ENCODE measurements at regions of chr16 and their contacts with region 1.

Region 1: DNA sequence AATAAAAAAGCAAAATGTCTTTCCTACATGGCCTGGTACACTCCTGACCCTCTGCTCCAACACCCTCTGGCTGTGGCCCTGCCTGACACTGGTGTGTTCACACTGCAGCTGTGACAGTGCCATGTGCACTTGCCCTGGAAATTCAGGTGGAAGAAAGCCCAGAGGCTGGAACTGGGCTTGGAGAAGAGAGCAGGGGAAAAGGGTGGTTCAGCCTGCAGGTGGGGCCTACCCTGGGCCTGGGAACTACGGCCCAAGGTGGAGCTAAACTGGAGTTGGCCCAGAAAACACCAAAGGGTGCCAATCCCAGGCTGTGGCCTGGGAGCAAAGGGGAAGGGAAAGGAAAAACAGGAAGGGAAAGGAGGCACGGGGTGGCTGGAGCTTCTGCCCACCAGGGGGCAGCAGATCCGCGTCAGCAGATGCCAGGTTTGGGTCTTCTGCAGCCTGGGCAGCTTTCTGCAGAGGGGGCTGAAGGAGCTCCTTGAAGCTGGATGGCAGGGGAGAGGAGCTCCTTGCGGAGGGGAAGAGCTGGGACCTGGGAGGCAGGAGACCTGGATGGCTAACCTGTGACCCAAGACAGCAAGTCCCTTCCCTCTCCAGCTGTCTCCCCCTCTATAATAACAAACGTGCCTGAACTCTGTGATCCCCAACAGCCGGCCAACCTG is 15.4 kb upstream of the CTCF start:
- DNase-seq: peak; percentile 65
- ATAC-seq: peak; percentile 78
- H3K4me3 ChIP-seq: no peak overlapping the region
- H3K27ac ChIP-seq: peak overlapping the region; percentile 29
- H3K4me1 ChIP-seq: peaks cover 4% of the 10 kb centered on the region; the same call in 1 of the 2 replicates
- H3K27me3 ChIP-seq: no peaks in the 10 kb centered on the region
- CTCF ChIP-seq: peak; percentile 96
- EP300 ChIP-seq: no peak
- POLR2A ChIP-seq: no peak
- RAD21 ChIP-seq: peak; percentile 97

Region 2: GRCh38 chr16:67641779-67642708 is 95.2 kb after region 1 on chr16:
- CTCF ChIA-PET with region 1: interaction called, 37 read pairs
- POLR2A ChIA-PET with region 1: no interaction called
- in situ Hi-C with region 1: loop called (anchors 5 kb)
- intact Hi-C with region 1: loop called (anchors 1 kb)
- DNase-seq: no peak
- ATAC-seq: peak; percentile 4
- H3K4me3 ChIP-seq: no peak overlapping the region
- H3K27ac ChIP-seq: no peak overlapping the region
- H3K4me1 ChIP-seq: peaks cover 17% of the 10 kb centered on the region
- H3K27me3 ChIP-seq: peaks cover 8 to 22% of the 10 kb centered on the region in 2 experiments
- CTCF ChIP-seq: no peak
- EP300 ChIP-seq: no peak
- POLR2A ChIP-seq: no peak
- RAD21 ChIP-seq: no peak

Region 3: DNA sequence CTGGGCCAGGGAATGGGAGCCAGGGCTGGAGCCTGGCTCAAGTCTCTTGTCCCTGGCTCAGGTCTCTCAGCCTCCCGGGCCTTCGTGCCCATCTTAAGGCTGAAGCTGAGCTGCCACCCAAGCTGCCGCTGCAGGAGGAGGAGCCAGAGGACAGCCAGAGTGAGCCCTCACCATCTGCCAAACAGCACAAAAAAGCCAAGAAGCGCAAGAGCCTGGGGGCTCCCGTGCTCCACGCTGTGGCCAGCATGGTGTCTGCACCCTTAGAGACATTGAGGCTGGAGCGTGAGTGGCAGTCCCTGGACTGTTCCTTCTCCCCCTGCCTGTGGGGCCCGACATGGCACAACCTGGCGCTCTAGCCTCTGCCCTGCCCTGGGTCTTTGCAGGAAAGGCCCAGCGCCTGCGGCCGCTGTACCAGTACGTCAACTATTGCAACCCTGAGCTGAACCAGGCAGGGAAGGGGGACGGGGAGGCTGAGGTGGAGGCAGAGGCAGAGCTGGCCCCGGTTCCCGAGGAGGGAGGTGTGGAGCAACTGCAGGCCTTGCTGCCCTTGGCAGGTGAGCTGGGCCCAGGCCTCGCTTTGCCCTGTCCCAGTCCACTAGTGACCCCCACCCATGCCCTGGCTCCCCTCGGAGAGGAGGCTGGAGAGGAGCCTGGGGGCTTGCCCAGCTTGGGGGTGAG is 121.1 kb after region 1 on chr16:
- CTCF ChIA-PET with region 1: interaction called, 20 read pairs
- POLR2A ChIA-PET with region 1: interaction called, 7 read pairs
- in situ Hi-C with region 1: no loop called
- intact Hi-C with region 1: no loop called
- DNase-seq: peak; percentile 96
- ATAC-seq: peak; percentile 88
- H3K4me3 ChIP-seq: peak overlapping the region; percentile 77 to 96 (median 88)
- H3K27ac ChIP-seq: peak overlapping the region; percentile 21
- H3K4me1 ChIP-seq: peaks cover 39% of the 10 kb centered on the region
- H3K27me3 ChIP-seq: no peaks in the 10 kb centered on the region; a peak in 1 of 5 replicates
- CTCF ChIP-seq: peak; percentile 99
- EP300 ChIP-seq: no peak
- POLR2A ChIP-seq: peak in 1 of 2 experiments; percentile 24; a peak in 1 of 4 replicates
- RAD21 ChIP-seq: peak; percentile 98

Measured in HepG2 (cell line).